ENCODE measurements at regions of chr16 and their contacts with region 1.

Region 1: GRCh38 chr16:15888072-15888976 is at the start of gene CEP20:
- DNase-seq: peak; percentile 99 to 100
- H3K4me3 ChIP-seq: peak within 1 kb of the TSS; percentile 81 to 87
- H3K27ac ChIP-seq: peak within 1 kb of the TSS; percentile 79 to 93
- H3K4me1 ChIP-seq: peaks cover 0 to 11% of the 10 kb centered on the region in 2 donors
- H3K27me3 ChIP-seq: no peaks in the 10 kb centered on the region
- CTCF ChIP-seq: peak; percentile 11 to 55 (median 18)
- total RNA-seq, gene CEP20: 7.6 TPM

Region 2: GRCh38 chr16:16120382-16121184 is 232.3 kb after region 1 on chr16:
- intact Hi-C with region 1: loop called (anchors 5 kb)
- DNase-seq: no peak
- H3K4me3 ChIP-seq: no peak overlapping the region
- H3K27ac ChIP-seq: peak overlapping the region; percentile 8 to 37
- H3K4me1 ChIP-seq: no peaks in the 10 kb centered on the region
- H3K27me3 ChIP-seq: no peaks in the 10 kb centered on the region
- CTCF ChIP-seq: no peak

Measured in ascending aorta (tissue), 2 donors.